ENCODE measurements at regions of chr15 and their contacts with region 1.

Region 1: DNA sequence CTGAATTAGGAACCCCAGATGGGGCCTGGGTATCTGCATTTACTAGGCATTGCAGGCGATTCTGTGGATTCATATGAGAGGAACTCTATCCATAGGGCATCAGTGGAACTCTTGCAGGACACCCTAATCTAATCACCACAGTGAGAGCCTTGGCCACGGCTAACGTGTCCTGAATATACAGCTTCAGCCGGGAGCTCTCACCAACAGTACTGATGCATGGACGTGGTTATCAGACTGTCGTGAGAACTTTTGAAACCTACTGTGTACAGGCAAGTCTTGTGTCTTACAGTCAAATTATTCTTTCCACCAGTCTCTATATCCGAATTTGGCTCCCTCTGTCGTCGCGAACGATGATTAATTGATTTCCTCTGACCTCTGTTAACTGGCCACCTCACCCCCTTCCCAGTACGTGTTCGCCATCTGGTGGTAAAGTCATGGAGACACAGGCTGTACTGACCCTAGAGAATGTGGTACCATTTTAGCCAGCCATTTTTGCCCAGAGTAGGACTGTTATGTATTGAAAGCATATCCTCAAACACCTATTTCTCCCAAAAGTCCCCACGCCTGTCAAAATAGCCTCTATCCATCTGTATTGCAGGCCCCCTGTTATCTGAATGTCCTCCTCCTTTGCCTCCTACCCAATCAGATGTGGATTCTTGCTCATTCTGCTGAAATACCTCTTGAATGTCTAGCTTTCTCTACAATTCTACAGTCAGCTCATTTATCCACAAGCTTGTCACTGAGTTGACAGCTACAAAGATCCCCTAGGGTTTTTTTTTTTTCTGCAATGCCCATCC is 39.7 kb downstream of the GLDN start:
- DNase-seq: no peak
- H3K4me3 ChIP-seq: no peak overlapping the region
- CTCF ChIP-seq: peak; percentile 91

Region 2: DNA sequence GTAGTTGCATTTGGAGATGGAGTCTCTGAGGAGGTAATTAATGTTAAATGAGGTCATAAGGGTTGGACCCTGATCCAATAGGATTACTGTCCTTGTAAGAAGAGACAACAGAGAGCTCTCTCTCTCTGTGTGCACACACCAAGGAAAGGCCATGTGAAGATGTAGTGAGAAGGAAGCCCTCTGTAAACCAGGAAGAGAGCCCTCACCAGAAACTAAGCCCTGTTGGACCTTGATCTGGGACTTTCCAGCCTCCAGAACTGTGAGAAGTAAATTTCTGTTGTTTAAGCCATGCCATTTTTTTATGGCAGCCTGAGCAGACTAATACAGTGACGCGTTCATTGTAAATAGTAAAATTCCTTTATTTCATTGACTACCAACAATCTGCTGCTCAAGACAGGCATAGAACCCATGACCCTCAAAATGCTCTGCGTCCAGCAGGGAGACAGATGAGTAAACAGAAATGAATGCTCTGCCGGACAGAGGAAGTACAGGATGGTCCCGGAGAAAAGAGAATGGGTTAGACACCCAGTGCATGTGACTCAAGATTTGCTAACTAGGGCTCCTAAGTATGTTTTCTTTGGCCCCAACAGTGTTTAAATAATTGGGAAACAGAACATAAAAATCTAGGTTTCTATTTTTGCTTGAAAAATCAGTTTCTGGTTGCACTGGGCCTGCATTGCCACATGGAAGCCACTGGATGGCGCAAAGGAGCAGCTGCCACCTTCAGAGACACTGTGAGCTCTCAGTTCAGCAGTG is 248.6 kb before region 1 on chr15:
- CTCF ChIA-PET with region 1: interaction called, 11 read pairs
- POLR2A ChIA-PET with region 1: no interaction called
- DNase-seq: peak; percentile 95
- H3K4me3 ChIP-seq: no peak overlapping the region
- CTCF ChIP-seq: peak; percentile 94

Region 3: GRCh38 chr15:51192521-51193280 is 188.5 kb before region 1 on chr15:
- CTCF ChIA-PET with region 1: interaction called, 23 read pairs
- POLR2A ChIA-PET with region 1: no interaction called
- DNase-seq: no peak
- H3K4me3 ChIP-seq: no peak overlapping the region
- CTCF ChIP-seq: peak; percentile 93

Region 4: DNA sequence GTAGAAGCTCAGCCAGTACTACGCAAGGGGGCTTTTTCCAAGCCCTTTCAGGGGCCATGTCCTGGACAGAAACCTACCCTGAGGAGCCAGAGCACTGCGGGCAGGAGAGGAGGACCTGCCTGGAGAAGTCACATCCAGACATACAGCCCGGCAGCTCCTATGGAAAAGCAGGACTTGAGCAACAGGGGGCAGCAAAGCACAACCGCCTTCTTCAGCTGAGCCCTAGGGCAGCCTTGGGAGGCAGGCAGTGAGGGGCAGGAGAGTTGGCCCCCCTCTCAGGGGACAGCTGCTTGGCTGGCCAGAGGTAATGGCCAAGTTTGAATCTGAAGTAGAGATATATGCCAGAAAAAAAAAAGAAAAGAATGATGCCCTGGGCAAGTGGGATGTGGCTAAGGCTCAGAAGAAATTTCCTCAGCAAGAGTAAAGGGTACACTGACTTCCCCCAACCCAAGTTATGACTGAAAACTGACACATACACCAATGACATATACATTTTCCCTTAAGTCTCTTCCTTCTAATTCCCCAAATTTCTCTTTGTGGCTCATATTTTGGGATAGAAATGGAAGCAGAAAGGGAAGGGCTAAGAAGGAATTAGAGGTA is 99.7 kb before region 1 on chr15:
- CTCF ChIA-PET with region 1: interaction called, 126 read pairs
- POLR2A ChIA-PET with region 1: no interaction called
- DNase-seq: no peak
- H3K4me3 ChIP-seq: no peak overlapping the region
- CTCF ChIP-seq: peak; percentile 87

Region 5: DNA sequence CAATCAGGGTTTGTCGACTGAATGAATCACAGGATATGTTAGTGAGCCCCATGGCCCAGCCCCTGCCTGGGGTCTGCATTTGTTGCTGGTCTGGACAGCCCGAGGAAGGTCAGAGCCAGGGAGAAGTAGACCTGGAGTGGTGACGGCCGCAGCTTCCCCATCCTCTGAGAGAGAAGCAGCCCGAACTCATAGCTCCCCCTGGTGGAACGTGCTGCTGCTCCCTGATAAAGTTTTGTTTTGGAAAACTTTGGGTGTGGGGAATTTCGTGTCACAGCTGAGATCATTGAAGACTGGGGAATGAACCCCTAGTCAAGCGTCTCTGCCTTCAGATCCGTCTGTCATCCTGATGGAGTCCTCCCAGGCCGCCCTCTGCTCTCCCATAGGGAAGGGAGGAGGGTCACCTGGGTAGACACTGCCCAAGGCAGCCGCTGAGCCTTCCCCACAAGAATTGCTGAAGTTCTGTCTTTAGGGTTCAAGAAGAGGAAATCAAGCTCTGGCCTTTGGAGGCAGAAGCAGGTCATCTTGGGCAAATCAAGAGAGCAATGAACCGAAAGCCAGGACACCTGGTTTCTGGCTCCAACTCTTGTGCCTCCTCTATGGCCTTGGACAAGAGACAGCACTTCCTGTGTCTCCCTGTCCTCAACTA is 20.8 kb after region 1 on chr15:
- CTCF ChIA-PET with region 1: interaction called, 29 read pairs
- POLR2A ChIA-PET with region 1: no interaction called
- DNase-seq: no peak
- H3K4me3 ChIP-seq: no peak overlapping the region
- CTCF ChIP-seq: peak; percentile 68

Region 6: GRCh38 chr15:51460796-51461195 is 79.6 kb after region 1 on chr15:
- CTCF ChIA-PET with region 1: no interaction called
- POLR2A ChIA-PET with region 1: no interaction called
- DNase-seq: no peak
- H3K4me3 ChIP-seq: no peak overlapping the region
- CTCF ChIP-seq: no peak

Region 7: DNA sequence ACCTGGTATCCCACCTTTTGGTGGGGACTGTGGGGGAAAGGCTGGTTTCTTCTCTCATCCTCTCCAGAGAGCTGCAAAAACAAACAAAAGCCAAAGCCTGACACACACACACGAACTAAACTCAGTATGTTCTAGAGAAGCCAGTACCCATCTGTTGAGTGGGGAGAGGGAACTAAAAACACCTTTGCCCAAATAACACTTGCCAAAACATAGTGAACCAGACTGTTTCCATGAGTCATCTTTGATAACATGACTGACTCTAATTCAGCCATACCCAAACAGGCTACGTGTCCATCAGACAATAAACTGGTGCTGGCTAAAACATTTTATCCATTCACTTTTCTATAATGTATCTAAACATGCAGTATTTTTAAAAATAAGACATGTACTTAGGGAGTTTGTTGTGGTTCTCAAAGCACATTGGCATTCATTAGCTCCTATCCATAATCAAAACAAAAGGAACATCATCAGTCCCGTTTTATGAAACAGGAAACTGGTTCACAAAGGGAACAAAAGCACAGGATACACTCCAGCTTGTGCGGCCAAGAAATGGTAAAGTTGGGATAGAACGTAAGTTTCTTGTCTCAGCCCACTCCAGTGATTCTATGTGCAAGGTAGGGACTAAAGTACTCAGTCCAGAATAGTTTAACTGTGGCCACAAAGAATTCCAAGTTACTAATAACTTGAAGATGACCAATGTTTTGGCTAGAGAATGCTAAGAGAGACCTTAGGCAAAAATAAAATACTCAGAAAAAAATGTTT is 340.2 kb after region 1 on chr15:
- CTCF ChIA-PET with region 1: no interaction called
- POLR2A ChIA-PET with region 1: no interaction called
- DNase-seq: no peak
- H3K4me3 ChIP-seq: no peak overlapping the region
- CTCF ChIP-seq: no peak

Measured in AG04449 (cell line).